Esophagus muscularis mucosa (tissue), 4 donors: ENCODE measurements at regions of chr11 and their contacts with region 1.

Region 1: GRCh38 chr11:86068951-86069407 is at the start of gene PICALM:
- DNase-seq: peak; percentile 100
- H3K4me3 ChIP-seq: peak within 1 kb of the TSS; percentile 70 to 98 (median 87)
- H3K27ac ChIP-seq: peak within 1 kb of the TSS; percentile 95 to 99 (median 97)
- H3K4me1 ChIP-seq: peaks cover 29 to 40% (median 39%) of the 10 kb centered on the region in 4 donors
- H3K27me3 ChIP-seq: no peaks in the 10 kb centered on the region
- CTCF ChIP-seq: no peak
- EP300 ChIP-seq: no peak
- POLR2A ChIP-seq: peak; percentile 79
- total RNA-seq, gene PICALM: 228 to 281 (median 266) TPM

Region 2: GRCh38 chr11:85647604-85648299 is 421.2 kb before region 1 on chr11 and contains the start of gene TMEM126A:
- intact Hi-C with region 1: no loop called
- DNase-seq: peak; percentile 97
- H3K4me3 ChIP-seq: peak within 1 kb of the TSS; percentile 59 to 82 (median 73)
- H3K27ac ChIP-seq: peak within 1 kb of the TSS; percentile 82 to 86 (median 84)
- H3K4me1 ChIP-seq: peaks cover 20 to 25% (median 21%) of the 10 kb centered on the region in 4 donors
- H3K27me3 ChIP-seq: no peaks in the 10 kb centered on the region
- CTCF ChIP-seq: no peak
- EP300 ChIP-seq: no peak
- POLR2A ChIP-seq: peak; percentile 52
- total RNA-seq, gene TMEM126A: 19.0 to 48.6 (median 26.8) TPM

Region 3: DNA sequence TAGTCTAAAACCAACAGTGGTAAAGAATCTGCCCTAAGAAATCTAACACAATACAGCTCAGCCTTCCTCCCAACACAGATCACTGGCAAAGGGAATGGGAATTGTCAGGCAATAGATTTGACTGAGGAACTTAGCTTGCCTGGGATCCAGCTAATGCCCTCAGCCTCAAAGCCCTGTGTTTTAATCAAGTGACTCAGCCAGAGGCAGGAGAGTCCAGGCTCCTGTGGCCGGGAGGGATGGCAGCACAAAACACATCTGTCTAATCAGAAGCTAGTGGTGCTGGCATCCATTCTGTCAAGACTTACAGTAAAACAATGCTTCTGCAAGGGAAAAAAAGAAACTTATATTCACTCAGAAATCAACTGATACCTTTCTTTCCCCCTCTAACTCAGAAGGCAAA is 263.6 kb before region 1 on chr11:
- intact Hi-C with region 1: no loop called
- DNase-seq: no peak
- H3K4me3 ChIP-seq: no peak overlapping the region
- H3K27ac ChIP-seq: no peak overlapping the region
- H3K4me1 ChIP-seq: peaks cover 5 to 11% (median 5%) of the 10 kb centered on the region in 4 donors
- H3K27me3 ChIP-seq: no peaks in the 10 kb centered on the region
- CTCF ChIP-seq: no peak
- EP300 ChIP-seq: no peak
- POLR2A ChIP-seq: no peak

Region 4: DNA sequence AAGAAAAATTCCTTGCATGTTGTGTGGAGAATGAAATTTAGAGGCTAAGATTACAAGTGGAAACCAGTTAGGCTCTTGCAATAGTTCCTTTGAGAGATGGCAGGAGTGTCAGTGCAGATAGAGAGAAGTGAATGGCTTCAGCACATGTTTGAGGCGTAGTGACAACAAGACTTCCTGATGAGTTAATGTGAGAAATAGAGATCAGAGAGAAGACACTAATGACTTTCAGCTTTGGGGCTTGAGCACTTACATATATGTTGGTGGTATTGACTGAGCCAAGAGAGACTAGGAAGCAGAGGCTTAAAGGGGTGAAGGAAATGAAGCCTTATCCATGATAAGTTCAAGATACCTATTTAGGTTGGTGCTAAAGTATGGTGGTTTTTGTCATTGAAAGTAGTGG is 55.9 kb after region 1 on chr11:
- intact Hi-C with region 1: loop called (anchors 10 kb)
- DNase-seq: no peak
- H3K4me3 ChIP-seq: no peak overlapping the region
- H3K27ac ChIP-seq: no peak overlapping the region
- H3K4me1 ChIP-seq: peaks cover 0 to 9% (median 7%) of the 10 kb centered on the region in 4 donors
- H3K27me3 ChIP-seq: no peaks in the 10 kb centered on the region
- CTCF ChIP-seq: no peak
- EP300 ChIP-seq: no peak
- POLR2A ChIP-seq: no peak

Region 5: DNA sequence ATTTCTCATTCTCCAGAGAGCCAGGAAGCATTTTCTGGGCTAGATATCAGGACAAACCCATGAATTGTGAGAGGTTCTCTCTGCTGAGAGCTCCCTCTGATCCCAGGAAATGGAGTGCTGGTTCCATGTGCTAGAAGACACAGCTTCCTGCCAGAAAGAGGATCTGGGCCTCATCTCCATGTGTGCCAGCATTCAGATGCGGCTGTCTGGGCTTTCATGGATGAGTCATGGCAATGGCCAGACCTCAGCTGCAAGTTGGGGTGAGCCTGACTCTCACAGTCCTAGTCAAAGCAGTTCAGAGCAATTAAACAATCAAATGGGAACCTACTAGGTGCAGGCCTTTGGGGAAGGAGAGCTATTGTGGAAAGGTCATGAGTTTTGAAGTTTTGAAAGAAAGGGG is 93.3 kb after region 1 on chr11:
- intact Hi-C with region 1: no loop called
- DNase-seq: no peak
- H3K4me3 ChIP-seq: no peak overlapping the region
- H3K27ac ChIP-seq: peak overlapping the region; percentile 15 to 42 (median 30)
- H3K4me1 ChIP-seq: peaks cover 14 to 44% (median 41%) of the 10 kb centered on the region in 4 donors
- H3K27me3 ChIP-seq: no peaks in the 10 kb centered on the region
- CTCF ChIP-seq: no peak
- EP300 ChIP-seq: no peak
- POLR2A ChIP-seq: no peak